Colonic mucosa (tissue), 4 donors: ENCODE measurements at regions of chr15 and their contacts with region 1.

Region 1: DNA sequence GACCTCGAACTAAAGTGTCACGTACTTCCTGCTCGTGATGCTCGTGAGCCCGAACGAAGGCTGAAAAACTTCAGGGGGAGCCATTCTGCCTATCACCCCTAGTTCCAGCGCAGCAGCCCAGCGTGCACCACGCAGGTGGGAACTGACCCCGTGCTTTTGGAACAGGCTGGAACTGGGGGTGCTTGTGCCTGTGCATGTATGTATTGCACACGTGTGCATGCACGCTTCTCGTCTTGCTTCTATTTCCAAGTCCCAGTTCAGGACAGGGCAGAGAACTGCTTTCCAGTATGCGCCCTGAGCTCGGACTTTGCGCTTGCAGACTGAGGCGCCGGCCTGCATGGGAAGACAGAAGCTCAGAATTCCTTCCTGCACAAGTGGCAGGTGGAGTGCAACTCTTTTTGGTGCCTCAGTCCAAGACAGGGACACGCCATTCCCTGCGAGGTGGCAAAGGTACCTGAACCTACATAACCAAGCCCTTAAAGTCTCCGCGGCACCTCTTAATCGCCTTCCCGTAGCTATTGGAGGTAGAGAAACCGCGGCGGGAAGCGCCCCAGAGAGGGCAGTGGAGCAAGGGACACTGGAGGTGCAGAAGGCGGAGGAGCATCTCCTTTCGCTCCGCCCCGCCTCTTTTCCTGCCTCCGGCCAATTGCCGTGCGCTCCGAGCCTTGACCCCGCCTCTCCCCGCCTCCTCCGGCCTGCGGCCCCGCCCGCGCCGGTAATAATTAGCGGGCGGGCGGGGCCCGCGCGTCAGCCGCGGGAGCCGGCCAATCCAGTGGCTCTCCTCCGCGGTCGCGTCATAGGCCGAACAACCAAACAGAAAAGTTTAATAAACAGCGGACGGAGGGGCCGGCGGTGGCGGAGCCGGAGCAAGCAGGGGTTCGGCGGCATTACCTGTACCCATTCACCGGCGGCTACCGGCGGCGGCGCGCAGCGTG is at the start of gene ZFAND6:
- DNase-seq: peak; percentile 97
- H3K4me3 ChIP-seq: peak within 1 kb of the TSS; percentile 85
- H3K27ac ChIP-seq: peak within 1 kb of the TSS; percentile 99
- H3K4me1 ChIP-seq: peaks cover 9% of the 10 kb centered on the region
- H3K27me3 ChIP-seq: no peaks in the 10 kb centered on the region
- CTCF ChIP-seq: no peak
- total RNA-seq, gene ZFAND6: 56.0 to 82.4 TPM

Region 2: GRCh38 chr15:79896637-79897379 is 162.3 kb before region 1 on chr15 and contains the start of gene MTHFS:
- intact Hi-C with region 1: loop called (anchors 10 kb)
- DNase-seq: peak; percentile 84
- H3K4me3 ChIP-seq: peak within 1 kb of the TSS; percentile 86
- H3K27ac ChIP-seq: peak within 1 kb of the TSS; percentile 95
- H3K4me1 ChIP-seq: peaks cover 6% of the 10 kb centered on the region
- H3K27me3 ChIP-seq: no peaks in the 10 kb centered on the region
- CTCF ChIP-seq: peak; percentile 34
- total RNA-seq, gene MTHFS: 24.6 to 25.9 TPM

Region 3: DNA sequence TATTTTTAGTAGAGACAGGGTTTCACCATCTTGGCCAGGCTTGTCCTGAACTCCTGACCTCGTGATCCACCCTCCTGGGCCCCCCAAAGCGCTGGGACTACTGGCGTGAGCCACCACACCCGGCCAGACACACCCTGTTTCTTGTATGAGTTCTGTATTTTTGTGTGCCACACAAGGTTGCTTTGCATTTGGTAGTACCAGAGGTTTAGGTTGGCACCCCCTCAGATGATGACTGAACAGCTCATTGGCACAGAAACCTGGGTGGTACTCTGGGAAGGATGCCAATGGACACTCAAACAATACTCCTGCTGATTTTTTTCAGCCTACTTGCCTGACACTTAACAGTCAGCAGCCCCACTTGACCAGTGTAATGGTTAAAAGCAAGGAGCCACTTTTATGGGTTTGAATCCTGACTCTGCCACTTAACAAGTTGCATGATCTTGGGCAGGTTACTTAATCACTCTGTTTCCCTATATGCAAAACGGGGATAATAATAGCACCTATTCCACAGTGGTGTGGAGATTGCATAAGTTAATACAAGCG is 48.9 kb before region 1 on chr15:
- intact Hi-C with region 1: no loop called
- DNase-seq: no peak
- H3K4me3 ChIP-seq: no peak overlapping the region
- H3K27ac ChIP-seq: no peak overlapping the region
- H3K4me1 ChIP-seq: no peaks in the 10 kb centered on the region
- H3K27me3 ChIP-seq: no peaks in the 10 kb centered on the region
- CTCF ChIP-seq: no peak

Region 4: GRCh38 chr15:80152180-80152845 is 93.2 kb after region 1 on chr15:
- intact Hi-C with region 1: loop called (anchors 10 kb)
- DNase-seq: peak; percentile 98
- H3K4me3 ChIP-seq: peak overlapping the region; percentile 59
- H3K27ac ChIP-seq: peak overlapping the region; percentile 60
- H3K4me1 ChIP-seq: no peaks in the 10 kb centered on the region
- H3K27me3 ChIP-seq: no peaks in the 10 kb centered on the region
- CTCF ChIP-seq: no peak

Region 5: DNA sequence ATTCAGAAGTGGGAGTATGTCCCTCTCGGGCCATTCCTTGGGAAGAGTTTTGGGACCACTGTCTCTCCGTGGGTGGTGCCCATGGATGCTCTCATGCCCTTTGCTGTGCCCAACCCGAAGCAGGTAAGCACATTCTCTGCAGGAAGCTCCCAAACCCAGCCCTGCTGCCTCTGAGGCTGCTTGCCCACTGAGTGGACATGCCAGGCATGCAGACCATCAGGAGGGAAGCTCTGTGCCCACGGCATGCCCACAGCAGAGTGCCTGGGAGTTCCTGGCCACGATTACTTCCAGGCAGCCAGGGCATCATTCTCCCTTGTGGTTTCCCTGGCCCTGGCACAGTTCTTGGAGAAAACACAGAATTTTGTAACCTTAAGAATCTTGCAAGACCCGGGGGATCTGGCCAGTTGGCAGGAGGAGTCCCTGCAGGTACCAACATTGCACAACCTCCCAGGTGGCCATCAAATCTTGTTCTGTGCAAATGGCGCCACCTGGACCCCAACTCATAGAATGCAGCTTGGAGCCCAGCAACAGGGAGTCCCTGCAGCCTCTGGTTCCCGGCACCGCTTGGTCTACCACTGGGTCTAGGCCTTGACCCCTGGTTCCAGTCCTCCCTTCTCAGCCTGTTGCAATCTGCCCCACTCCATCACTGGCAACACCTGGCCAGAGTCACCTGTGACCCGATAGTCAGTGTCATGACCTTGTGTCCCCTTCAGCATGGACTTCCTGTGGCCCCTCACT is 114.1 kb after region 1 on chr15:
- intact Hi-C with region 1: loop called (anchors 5 kb)
- DNase-seq: peak; percentile 72
- H3K4me3 ChIP-seq: no peak overlapping the region
- H3K27ac ChIP-seq: no peak overlapping the region
- H3K4me1 ChIP-seq: no peaks in the 10 kb centered on the region
- H3K27me3 ChIP-seq: no peaks in the 10 kb centered on the region
- CTCF ChIP-seq: peak; percentile 67

Region 6: GRCh38 chr15:80275934-80276333 is 216.8 kb after region 1 on chr15:
- intact Hi-C with region 1: no loop called
- DNase-seq: no peak
- H3K4me3 ChIP-seq: no peak overlapping the region
- H3K27ac ChIP-seq: no peak overlapping the region
- H3K4me1 ChIP-seq: no peaks in the 10 kb centered on the region
- H3K27me3 ChIP-seq: no peaks in the 10 kb centered on the region
- CTCF ChIP-seq: no peak